Dorsolateral prefrontal cortex (tissue), 120 donors: ENCODE measurements at regions of chr9 and their contacts with region 1.

Region 1: GRCh38 chr9:87678650-87679515 is 47.0 kb upstream of the CTSL start:
- DNase-seq: peak in 7 of 10 donors; percentile 58 to 77 (median 67)
- H3K4me3 ChIP-seq: no peak overlapping the region
- H3K27ac ChIP-seq: peak overlapping the region in 2 of 59 donors; percentile 12 to 15
- H3K27me3 ChIP-seq: no peaks in the 10 kb centered on the region
- CTCF ChIP-seq: peak; percentile 75 to 94 (median 87)

Region 2: DNA sequence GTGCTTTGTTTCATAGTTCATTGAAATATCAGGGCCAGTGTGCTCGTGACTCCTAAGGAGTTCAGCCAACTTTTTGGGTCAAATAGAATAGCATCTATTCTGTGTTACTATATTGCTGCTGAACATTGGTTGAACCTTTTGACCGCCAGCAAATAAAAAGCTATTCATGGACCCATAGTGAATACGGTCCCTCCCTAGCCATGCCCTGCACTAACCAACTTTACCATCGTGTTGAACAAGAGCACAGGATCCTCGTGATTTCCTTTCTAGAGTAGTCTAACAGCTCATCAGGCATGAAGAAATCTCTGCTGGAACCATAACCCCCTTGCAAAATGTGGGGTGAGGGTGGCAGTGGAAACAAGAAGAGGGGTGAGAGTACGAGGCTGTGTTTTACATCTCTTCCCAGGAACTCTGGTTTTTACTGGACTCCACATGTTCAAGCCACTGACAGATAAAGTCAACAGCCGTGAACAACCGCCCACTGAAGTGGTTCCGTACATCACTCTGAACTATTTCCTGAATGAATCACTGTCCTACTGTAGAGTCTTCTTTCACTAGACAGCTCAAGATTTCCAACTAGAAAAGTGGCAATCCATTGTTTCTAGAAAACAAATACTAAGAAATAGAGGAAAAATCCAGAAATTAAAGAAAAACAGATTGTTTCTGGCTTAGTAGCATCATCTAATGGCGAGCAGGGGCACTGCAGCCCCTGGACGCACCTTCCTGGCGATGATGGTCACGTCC is 133.7 kb after region 1 on chr9:
- intact Hi-C with region 1: loop called (anchors 1 to 2 kb)
- DNase-seq: peak in 1 of 10 donors; percentile 33
- H3K4me3 ChIP-seq: peak overlapping the region in 12 of 59 donors; percentile 2 to 44 (median 22)
- H3K27ac ChIP-seq: no peak overlapping the region
- H3K27me3 ChIP-seq: peaks cover 0 to 11% (median 0%) of the 10 kb centered on the region in 45 donors
- CTCF ChIP-seq: peak; percentile 29 to 96 (median 83)

Region 3: DNA sequence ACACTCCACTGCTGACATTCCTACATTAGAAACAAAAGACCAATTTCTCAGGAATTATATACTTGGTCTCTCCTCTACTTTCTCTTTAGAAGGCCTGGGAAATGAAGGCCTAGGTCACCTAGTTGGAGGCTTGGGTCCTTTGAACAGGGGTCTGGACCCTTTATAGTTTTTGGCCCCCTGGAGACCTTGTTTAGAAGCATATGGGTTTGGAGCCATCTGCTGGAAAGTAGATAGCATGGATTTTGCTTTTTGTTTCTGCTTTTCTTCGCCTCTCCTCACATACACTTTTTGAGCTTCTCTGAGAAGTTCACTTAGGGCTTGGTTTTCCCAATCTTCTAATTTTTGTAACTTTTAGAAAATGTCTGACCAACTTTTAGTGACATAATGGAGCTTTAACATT is 362.6 kb after region 1 on chr9:
- intact Hi-C with region 1: loop called (anchors 5 to 10 kb)
- DNase-seq: no peak
- H3K4me3 ChIP-seq: no peak overlapping the region
- H3K27ac ChIP-seq: no peak overlapping the region
- H3K27me3 ChIP-seq: no peaks in the 10 kb centered on the region
- CTCF ChIP-seq: peak in 54 of 56 donors; percentile 11 to 70 (median 48)